Panc1 (cell line): ENCODE measurements at regions of chr12 and their contacts with region 1.

Region 1: GRCh38 chr12:48618541-48618940 is 48.7 kb upstream of the LALBA start:
- DNase-seq: peak; percentile 85
- ATAC-seq: peak; percentile 94
- H3K4me3 ChIP-seq: no peak overlapping the region
- H3K27ac ChIP-seq: no peak overlapping the region
- H3K4me1 ChIP-seq: no peaks in the 10 kb centered on the region
- H3K27me3 ChIP-seq: peaks cover 5% of the 10 kb centered on the region; the same call in 1 of the 2 replicates
- CTCF ChIP-seq: peak; percentile 98

Region 2: GRCh38 chr12:48508991-48509390 is 109.5 kb before region 1 on chr12:
- CTCF ChIA-PET with region 1: no interaction called
- POLR2A ChIA-PET with region 1: no interaction called
- in situ Hi-C with region 1: no loop called
- intact Hi-C with region 1: no loop called
- DNase-seq: no peak
- ATAC-seq: no peak
- H3K4me3 ChIP-seq: no peak overlapping the region
- H3K27ac ChIP-seq: no peak overlapping the region
- H3K4me1 ChIP-seq: no peaks in the 10 kb centered on the region
- H3K27me3 ChIP-seq: peaks cover 7% of the 10 kb centered on the region; the same call in 1 of the 2 replicates
- CTCF ChIP-seq: no peak

Region 3: GRCh38 chr12:48542300-48542928 is 76.1 kb before region 1 on chr12:
- CTCF ChIA-PET with region 1: interaction called, 53 read pairs
- POLR2A ChIA-PET with region 1: interaction called, 3 read pairs
- in situ Hi-C with region 1: no loop called
- intact Hi-C with region 1: loop called (anchors 1 kb)
- DNase-seq: peak; percentile 32
- ATAC-seq: peak; percentile 88
- H3K4me3 ChIP-seq: no peak overlapping the region
- H3K27ac ChIP-seq: no peak overlapping the region
- H3K4me1 ChIP-seq: no peaks in the 10 kb centered on the region
- H3K27me3 ChIP-seq: peaks cover 6% of the 10 kb centered on the region; the same call in 1 of the 2 replicates
- CTCF ChIP-seq: peak; percentile 94

Region 4: GRCh38 chr12:48681738-48682532 is 63.4 kb after region 1 on chr12 and contains the start of gene KANSL2:
- CTCF ChIA-PET with region 1: no interaction called
- POLR2A ChIA-PET with region 1: no interaction called
- in situ Hi-C with region 1: no loop called
- intact Hi-C with region 1: no loop called
- DNase-seq: peak; percentile 94
- ATAC-seq: peak; percentile 99
- H3K4me3 ChIP-seq: peak within 1 kb of the TSS; percentile 95 to 98
- H3K27ac ChIP-seq: peak within 1 kb of the TSS; percentile 97
- H3K4me1 ChIP-seq: peaks cover 20% of the 10 kb centered on the region
- H3K27me3 ChIP-seq: no peaks in the 10 kb centered on the region
- CTCF ChIP-seq: no peak
- total RNA-seq, gene KANSL2: 36.9 TPM

Region 5: DNA sequence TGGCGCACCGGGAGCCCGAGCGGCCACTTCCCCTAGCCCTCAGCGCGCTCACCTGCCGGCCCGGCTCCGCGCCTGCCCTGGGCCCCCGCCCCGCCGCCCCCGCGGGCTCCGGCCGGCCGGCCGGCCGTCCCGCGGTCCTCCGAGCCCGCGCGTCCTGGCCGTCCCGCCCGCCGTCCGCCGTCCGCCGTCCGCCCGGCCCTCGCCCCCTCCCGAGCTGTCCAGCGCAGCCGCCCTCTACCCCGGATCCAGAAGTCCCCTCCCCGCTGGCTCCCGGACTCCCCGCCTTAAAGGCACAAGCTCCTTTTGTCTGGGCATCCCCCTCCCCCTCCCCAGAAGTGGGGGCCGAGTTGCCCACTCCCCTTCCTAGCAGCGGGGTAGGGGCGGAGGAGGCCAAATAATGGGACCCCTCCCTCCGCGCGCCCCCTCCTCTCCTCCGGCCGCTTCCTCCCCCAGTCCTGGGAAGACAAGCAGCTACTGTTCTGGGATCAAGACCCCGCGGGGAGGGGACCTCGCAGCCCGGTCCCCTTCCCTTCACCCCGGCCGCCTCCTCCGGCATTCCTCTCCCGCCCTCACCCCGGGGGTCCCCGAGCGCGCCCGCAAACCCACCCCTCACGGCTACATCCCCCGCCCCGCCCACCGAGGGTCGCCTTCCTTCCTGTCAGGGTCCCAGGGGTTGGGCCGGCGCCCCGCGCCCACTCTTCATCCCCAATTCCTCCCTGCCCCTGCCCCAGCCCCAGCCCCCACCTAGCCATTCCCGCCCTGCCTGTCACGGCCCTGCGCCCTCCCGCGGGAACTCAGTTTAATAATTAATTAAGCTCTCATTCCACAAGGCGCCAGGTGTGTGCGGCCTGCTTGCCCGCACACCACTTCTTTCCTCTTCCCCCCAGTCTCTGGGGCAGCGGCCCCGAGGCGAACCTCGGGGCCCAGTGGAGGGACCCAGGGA is 170.6 kb after region 1 on chr12 and contains the start of gene ADCY6:
- CTCF ChIA-PET with region 1: no interaction called
- POLR2A ChIA-PET with region 1: no interaction called
- in situ Hi-C with region 1: no loop called
- intact Hi-C with region 1: no loop called
- DNase-seq: no peak
- ATAC-seq: peak; percentile 86
- H3K4me3 ChIP-seq: peak within 1 kb of the TSS; percentile 61 to 70
- H3K27ac ChIP-seq: peak within 1 kb of the TSS; percentile 70
- H3K4me1 ChIP-seq: peaks cover 3% of the 10 kb centered on the region
- H3K27me3 ChIP-seq: no peaks in the 10 kb centered on the region
- CTCF ChIP-seq: no peak
- total RNA-seq, gene ADCY6: 24.1 TPM